Thyroid gland (tissue), 4 donors: ENCODE measurements at regions of chr19 and their contacts with region 1.

Region 1: DNA sequence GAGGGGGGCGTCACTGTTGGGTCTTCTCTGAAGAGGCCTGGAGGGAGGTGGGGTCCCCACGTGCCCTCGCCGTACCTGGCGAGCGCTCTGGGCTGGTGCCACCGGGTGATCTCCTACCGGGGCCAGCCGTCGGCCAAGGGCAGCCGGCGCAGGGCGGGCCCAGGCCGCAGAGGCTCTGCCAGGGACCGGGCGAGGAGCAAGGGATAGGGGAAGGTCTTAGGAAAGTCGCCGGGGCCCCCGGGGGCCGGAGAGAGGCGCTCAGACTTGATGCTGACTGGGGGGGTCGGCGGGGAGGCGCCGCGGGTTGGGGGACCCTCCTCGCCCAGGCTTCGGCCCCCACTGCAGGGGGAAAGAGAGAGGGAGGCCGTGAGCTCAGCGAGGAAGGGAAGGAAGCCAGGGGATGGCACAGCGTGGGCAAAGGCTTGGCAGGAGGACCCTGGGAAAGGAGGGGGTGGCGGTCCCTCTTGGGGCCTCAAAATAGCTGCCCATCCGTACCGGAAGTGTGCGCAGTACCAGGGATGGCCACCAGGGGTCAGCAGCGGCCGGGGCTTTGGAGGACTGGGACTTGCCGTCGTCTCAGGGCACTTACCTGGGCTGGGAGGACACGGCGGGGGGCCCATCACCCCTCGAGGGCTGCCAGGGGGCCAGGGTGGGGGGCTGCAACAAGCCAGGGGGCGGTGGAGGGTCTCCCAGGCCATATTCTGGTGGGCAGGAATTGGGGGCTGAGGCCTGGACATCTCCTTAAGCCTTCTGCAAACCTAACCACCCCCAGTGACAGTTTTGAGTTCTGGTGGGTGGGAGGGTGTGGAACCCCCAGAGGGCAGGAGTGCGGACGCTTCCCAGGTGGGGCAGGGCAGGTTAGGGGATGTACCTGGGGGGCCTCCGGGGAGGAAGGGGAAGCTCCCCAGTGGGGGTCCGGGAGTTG is 7.7 kb upstream of the TMEM161A start:
- DNase-seq: peak; percentile 69 to 77
- H3K4me3 ChIP-seq: no peak overlapping the region
- H3K27ac ChIP-seq: no peak overlapping the region
- H3K4me1 ChIP-seq: peaks cover 4 to 7% of the 10 kb centered on the region in 2 donors
- H3K27me3 ChIP-seq: no peaks in the 10 kb centered on the region
- CTCF ChIP-seq: peak; percentile 80 to 99 (median 92)
- POLR2A ChIP-seq: no peak

Region 2: DNA sequence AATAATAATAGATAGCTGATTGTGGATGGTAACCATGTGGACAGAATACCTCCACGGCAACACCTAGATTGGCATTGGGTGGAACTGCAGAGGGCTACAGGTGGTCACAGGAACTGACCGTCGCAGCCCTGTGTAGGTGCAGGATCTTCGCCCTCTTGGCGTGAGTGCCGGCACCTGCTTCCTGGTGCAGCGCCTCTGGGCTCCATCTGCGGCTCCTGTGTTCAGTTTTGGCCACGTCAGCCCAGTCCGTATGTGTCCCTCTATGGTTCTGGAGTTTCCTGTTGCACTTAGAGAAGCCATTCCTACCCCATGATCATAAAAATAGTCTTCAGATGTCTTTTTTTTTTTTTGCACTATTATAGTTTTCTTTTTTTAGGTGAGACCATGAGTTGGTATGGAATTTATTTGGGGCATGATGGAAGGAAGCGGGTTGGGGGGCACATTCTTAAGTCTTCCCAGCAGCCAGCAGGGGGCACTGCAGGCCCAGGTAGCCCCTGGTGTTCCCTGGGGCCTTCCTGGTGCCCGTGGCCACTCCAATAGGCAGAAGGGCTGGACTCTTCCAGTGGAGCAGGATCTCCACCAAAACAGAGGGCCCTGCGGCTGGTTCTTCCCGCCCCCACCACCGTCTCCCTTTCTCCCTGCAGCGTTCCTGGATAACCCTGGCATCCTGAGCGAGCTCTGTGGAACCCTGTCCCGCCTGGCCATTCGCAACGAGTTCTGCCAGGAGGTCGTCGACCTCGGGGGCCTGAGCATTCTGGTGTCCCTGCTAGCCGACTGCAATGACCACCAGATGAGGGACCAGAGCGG is 92.2 kb before region 1 on chr19:
- intact Hi-C with region 1: loop called (anchors 2 kb)
- DNase-seq: peak; percentile 73 to 79
- H3K4me3 ChIP-seq: no peak overlapping the region
- H3K27ac ChIP-seq: no peak overlapping the region
- H3K4me1 ChIP-seq: peaks cover 0 to 4% of the 10 kb centered on the region in 2 donors
- H3K27me3 ChIP-seq: no peaks in the 10 kb centered on the region
- CTCF ChIP-seq: peak; percentile 43 to 81 (median 74)
- POLR2A ChIP-seq: no peak

Region 3: DNA sequence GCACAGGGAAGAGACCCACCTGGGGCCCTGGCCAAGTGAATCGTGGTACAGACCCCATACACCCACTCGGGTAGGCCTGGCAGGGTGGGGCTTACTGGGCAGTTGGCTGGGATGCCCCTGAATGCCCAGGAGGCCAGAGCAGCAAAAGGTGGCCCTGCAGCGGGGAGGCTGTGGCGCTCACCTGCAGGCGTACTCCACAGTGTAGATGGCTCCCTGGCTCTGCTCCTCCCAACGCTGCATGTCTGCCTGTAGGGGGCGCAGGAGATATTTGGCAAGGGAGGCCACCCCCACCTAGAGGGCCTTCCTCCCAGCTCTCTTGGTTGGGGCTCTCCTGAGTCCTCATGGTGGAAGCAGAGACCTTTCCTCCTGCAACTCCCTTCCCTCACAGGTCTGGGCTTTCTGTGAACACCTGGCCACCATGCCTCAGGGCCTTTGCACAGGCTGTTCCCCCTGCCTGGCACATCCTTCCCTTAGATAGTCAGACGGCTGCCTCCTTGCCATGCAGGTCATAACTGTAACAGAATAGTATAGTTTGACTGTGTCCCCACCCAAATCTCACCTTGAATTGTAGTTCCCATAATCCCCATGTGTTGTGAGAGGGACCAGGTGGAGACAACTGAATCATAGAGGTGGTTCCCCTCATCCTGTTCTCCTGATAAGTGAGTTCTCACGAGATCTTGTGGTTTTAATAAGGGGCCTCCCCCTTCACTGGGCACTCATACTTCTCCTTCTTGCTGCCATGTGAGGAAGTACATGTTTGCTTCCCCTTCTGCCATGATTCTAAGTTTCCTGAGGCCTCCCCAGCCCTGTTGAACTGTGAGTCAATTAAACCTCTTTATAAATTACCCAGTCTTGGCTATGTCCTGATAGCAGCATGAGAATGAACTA is 40.2 kb after region 1 on chr19:
- intact Hi-C with region 1: no loop called
- DNase-seq: peak; percentile 26 to 39
- H3K4me3 ChIP-seq: no peak overlapping the region
- H3K27ac ChIP-seq: no peak overlapping the region
- H3K4me1 ChIP-seq: peaks cover 12 to 23% of the 10 kb centered on the region in 2 donors
- H3K27me3 ChIP-seq: no peaks in the 10 kb centered on the region
- CTCF ChIP-seq: peak; percentile 15 to 58 (median 40)
- POLR2A ChIP-seq: no peak

Region 4: GRCh38 chr19:19224852-19225494 is 79.0 kb after region 1 on chr19:
- intact Hi-C with region 1: loop called (anchors 10 kb)
- DNase-seq: peak; percentile 79 to 82
- H3K4me3 ChIP-seq: peak overlapping the region in 1 of 3 donors; percentile 28
- H3K27ac ChIP-seq: no peak overlapping the region
- H3K4me1 ChIP-seq: peaks cover 0 to 8% of the 10 kb centered on the region in 2 donors
- H3K27me3 ChIP-seq: no peaks in the 10 kb centered on the region
- CTCF ChIP-seq: peak; percentile 32 to 78 (median 73)
- POLR2A ChIP-seq: no peak